Right cardiac atrium (tissue), 5 donors: ENCODE measurements at regions of chr13 and their contacts with region 1.

Region 1: DNA sequence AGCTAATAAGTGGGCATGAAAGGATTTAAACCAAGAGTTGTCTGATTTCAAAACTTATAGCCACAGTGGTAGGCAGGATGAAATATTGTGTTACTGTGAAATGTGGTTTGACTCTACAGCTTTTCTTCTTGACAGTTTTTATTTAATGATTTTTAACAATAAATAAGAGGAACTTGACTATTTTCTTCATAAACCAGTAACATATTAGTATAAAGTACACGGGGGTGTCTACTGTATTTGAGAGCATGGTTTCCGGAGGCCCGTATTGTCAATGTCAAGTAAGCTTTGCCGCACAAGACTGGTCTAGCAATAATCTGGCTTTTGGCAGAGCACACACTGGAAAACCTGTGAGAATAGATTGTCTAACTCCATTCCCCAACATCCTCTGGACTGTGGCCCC is 894.5 kb downstream of the PCDH9 start:
- DNase-seq: no peak
- ATAC-seq: no peak
- H3K4me3 ChIP-seq: no peak overlapping the region
- H3K27ac ChIP-seq: no peak overlapping the region
- H3K4me1 ChIP-seq: no peaks in the 10 kb centered on the region
- H3K27me3 ChIP-seq: no peaks in the 10 kb centered on the region

Region 2: GRCh38 chr13:66375756-66376155 is 40.1 kb after region 1 on chr13:
- intact Hi-C with region 1: loop called in 1 of 4 experiments (anchors 2 kb)
- DNase-seq: no peak
- ATAC-seq: no peak
- H3K4me3 ChIP-seq: no peak overlapping the region
- H3K27ac ChIP-seq: no peak overlapping the region
- H3K4me1 ChIP-seq: no peaks in the 10 kb centered on the region
- H3K27me3 ChIP-seq: no peaks in the 10 kb centered on the region

Region 3: DNA sequence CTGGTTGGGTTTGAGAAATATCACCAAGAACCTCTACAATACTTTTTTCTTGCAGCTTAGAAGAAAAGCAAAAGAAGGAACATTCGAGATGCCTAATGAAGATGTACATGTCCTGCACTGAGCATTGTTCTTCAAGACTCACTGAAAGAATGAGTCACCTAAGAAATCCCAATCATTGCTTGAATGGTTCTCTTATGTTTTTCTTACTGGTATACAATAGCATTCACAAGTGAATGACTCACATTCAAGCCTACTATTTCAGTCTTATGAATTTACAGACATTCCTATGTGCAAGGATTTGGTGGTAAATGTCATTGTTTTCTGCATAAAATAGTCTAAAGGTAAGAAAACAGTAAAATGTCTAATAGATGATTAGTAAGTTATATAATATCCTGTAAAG is 299.9 kb after region 1 on chr13:
- intact Hi-C with region 1: no loop called
- DNase-seq: no peak
- ATAC-seq: no peak
- H3K4me3 ChIP-seq: no peak overlapping the region
- H3K27ac ChIP-seq: no peak overlapping the region
- H3K4me1 ChIP-seq: no peaks in the 10 kb centered on the region
- H3K27me3 ChIP-seq: no peaks in the 10 kb centered on the region